CD8-positive, alpha-beta T cell (primary cell): ENCODE measurements at regions of chr15 and their contacts with region 1.

Region 1: GRCh38 chr15:70559265-70560239 is 203.8 kb downstream of the UACA start:
- DNase-seq: peak; percentile 37 to 86 (median 69)
- ATAC-seq: peak; percentile 84
- H3K4me3 ChIP-seq: peak overlapping the region; percentile 46 to 50
- H3K4me3 Mint-ChIP-seq: no peak overlapping the region
- H3K27ac ChIP-seq: peak overlapping the region in 1 of 2 experiments; percentile 44
- H3K27ac Mint-ChIP-seq: no peak overlapping the region
- H3K4me1 ChIP-seq: peaks cover 69% of the 10 kb centered on the region
- H3K4me1 Mint-ChIP-seq: peaks cover 5% of the 10 kb centered on the region
- H3K27me3 ChIP-seq: peaks cover 0 to 7% of the 10 kb centered on the region in 2 experiments
- H3K27me3 Mint-ChIP-seq: no peaks in the 10 kb centered on the region
- CTCF ChIP-seq: no peak

Region 2: DNA sequence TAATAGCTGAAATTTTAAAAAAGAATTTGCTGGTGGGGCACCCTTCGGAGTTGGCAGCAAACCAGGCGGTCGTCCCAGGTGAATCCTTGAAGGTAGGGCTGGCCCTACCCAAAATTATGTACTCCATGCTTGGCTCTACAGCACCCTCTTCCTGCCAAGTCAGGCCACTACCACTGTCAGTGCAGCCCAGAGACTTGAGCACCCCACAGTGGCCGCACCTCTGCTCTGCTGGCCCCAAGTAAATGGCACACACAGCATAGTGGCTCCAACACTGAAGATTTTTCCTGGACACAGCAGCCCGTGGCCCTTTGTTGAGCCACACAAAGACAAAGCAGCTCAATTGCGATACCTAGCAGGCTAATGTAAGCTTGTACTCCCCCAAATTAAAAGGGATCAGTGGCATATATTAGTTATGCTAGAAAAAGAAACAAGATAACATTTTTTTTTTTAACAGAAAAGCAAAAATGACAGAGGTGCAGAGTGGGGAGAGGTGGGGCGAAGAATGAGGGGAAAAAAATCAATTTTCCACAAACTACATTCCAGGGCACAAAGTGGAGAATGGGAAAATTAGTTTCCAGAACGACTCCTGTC is 46.7 kb before region 1 on chr15:
- CTCF ChIA-PET with region 1: interaction called, 5 read pairs
- POLR2A ChIA-PET with region 1: no interaction called
- intact Hi-C with region 1: loop called in 1 of 2 experiments (anchors 5 kb)
- DNase-seq: peak in 7 of 9 experiments; percentile 26 to 78 (median 54)
- ATAC-seq: peak; percentile 94
- H3K4me3 ChIP-seq: no peak overlapping the region
- H3K4me3 Mint-ChIP-seq: no peak overlapping the region
- H3K27ac ChIP-seq: no peak overlapping the region
- H3K27ac Mint-ChIP-seq: no peak overlapping the region
- H3K4me1 ChIP-seq: peaks cover 10% of the 10 kb centered on the region
- H3K4me1 Mint-ChIP-seq: peaks cover 19% of the 10 kb centered on the region
- H3K27me3 ChIP-seq: no peaks in the 10 kb centered on the region
- H3K27me3 Mint-ChIP-seq: no peaks in the 10 kb centered on the region
- CTCF ChIP-seq: peak; percentile 70

Region 3: DNA sequence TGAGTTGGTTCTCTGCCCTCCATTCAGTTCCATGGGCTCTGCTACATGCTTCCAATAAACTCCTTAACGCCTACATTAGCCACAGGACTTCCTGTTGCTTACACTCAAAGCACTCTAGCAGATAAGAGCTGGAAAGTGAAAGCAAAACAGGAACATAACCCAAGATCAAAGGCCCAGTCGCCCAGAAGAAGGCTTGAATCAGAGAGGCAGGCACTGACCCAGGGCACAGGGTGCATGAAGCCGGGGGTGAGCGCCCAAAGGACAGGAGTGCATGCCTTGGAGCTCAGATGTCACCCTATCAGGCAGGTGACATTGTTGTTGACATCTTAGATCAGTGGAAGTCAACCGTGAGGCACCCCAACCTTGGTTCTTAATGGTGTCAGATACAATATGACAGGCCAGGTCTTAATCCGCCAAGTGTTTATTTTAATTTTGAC is 31.3 kb before region 1 on chr15:
- CTCF ChIA-PET with region 1: interaction called, 5 read pairs
- POLR2A ChIA-PET with region 1: interaction called, 15 read pairs
- intact Hi-C with region 1: loop called in 1 of 2 experiments (anchors 1 kb)
- DNase-seq: peak in 7 of 9 experiments; percentile 42 to 89 (median 67)
- ATAC-seq: peak; percentile 85
- H3K4me3 ChIP-seq: peak overlapping the region; percentile 7 to 40
- H3K4me3 Mint-ChIP-seq: peak overlapping the region; percentile 80
- H3K27ac ChIP-seq: peak overlapping the region; percentile 48 to 69
- H3K27ac Mint-ChIP-seq: peak overlapping the region; percentile 98
- H3K4me1 ChIP-seq: peaks cover 56% of the 10 kb centered on the region
- H3K4me1 Mint-ChIP-seq: peaks cover 80% of the 10 kb centered on the region
- H3K27me3 ChIP-seq: no peaks in the 10 kb centered on the region
- H3K27me3 Mint-ChIP-seq: no peaks in the 10 kb centered on the region
- CTCF ChIP-seq: no peak

Region 4: GRCh38 chr15:70535071-70535954 is 24.2 kb before region 1 on chr15:
- CTCF ChIA-PET with region 1: interaction called, 17 read pairs
- POLR2A ChIA-PET with region 1: interaction called, 18 read pairs
- intact Hi-C with region 1: loop called (anchors 1 kb)
- DNase-seq: peak; percentile 25 to 81 (median 67)
- ATAC-seq: peak; percentile 77
- H3K4me3 ChIP-seq: peak overlapping the region; percentile 63 to 67
- H3K4me3 Mint-ChIP-seq: peak overlapping the region; percentile 86
- H3K27ac ChIP-seq: peak overlapping the region; percentile 61 to 78
- H3K27ac Mint-ChIP-seq: peak overlapping the region; percentile 94
- H3K4me1 ChIP-seq: peaks cover 46% of the 10 kb centered on the region
- H3K4me1 Mint-ChIP-seq: peaks cover 75% of the 10 kb centered on the region
- H3K27me3 ChIP-seq: no peaks in the 10 kb centered on the region
- H3K27me3 Mint-ChIP-seq: no peaks in the 10 kb centered on the region
- CTCF ChIP-seq: no peak